Tibial artery (tissue), 4 donors: ENCODE measurements at regions of chr19 and their contacts with region 1.

Region 1: GRCh38 chr19:48696353-48697010 is 711 bp downstream of the FUT2 start:
- DNase-seq: no peak
- H3K4me3 ChIP-seq: no peak overlapping the region
- H3K27ac ChIP-seq: no peak overlapping the region
- H3K4me1 ChIP-seq: peaks cover 0 to 10% (median 2%) of the 10 kb centered on the region in 4 donors
- H3K27me3 ChIP-seq: peaks cover 0 to 28% of the 10 kb centered on the region in 2 donors
- CTCF ChIP-seq: no peak

Region 2: DNA sequence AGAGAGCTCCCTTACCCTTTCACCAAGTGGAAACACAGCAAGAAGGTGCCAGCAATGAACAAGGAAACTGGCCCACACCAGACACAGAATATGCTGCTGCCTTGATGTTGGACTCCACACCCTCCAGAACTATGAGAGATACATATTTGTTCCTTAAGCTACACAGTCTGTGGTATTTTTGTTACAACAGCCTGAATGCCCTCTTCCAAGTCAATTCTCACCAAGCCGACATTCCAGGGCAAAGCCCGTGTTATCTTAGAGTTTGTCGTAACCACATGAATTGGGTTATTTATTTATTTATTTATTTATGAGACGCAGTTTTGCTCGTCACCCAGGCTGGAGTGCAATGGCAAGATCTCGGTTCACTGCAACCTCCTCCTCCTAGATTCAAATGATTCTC is 73.8 kb after region 1 on chr19:
- intact Hi-C with region 1: loop called (anchors 2 kb)
- DNase-seq: no peak
- H3K4me3 ChIP-seq: no peak overlapping the region
- H3K27ac ChIP-seq: no peak overlapping the region
- H3K4me1 ChIP-seq: no peaks in the 10 kb centered on the region
- H3K27me3 ChIP-seq: peaks cover 0 to 30% of the 10 kb centered on the region in 2 donors
- CTCF ChIP-seq: no peak

Region 3: DNA sequence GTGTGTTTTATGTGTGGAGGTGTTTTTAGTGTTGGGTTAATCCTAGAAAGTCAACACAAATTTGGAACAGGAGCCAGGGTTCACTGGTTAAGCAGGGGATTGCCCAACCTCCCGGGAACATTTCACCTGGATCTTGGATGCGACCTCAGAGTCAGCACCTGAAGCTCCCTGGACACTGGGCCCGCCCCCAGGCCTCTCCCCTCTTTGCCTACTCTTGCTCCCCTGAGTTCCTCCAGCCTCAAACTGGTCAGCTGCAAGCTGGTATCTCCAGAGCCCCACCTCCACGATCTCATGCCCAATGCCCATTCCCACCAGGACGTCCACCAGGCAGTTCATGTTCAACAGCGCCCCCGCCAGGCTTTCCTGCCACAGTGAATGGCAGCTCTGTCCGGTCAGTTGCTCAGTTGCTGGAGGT is 130.1 kb after region 1 on chr19:
- intact Hi-C with region 1: no loop called
- DNase-seq: no peak
- H3K4me3 ChIP-seq: no peak overlapping the region
- H3K27ac ChIP-seq: no peak overlapping the region
- H3K4me1 ChIP-seq: no peaks in the 10 kb centered on the region
- H3K27me3 ChIP-seq: no peaks in the 10 kb centered on the region
- CTCF ChIP-seq: no peak